HCT116 (cell line): ENCODE measurements at regions of chr6 and their contacts with region 1.

Region 1: GRCh38 chr6:20877008-20877937 is 343.0 kb downstream of the CDKAL1 start:
- DNase-seq: peak; percentile 95
- ATAC-seq: peak; percentile 95
- H3K4me3 ChIP-seq: peak overlapping the region in 1 of 2 experiments; percentile 27; a peak in 2 of 4 replicates
- H3K27ac ChIP-seq: peak overlapping the region; percentile 95
- H3K4me1 ChIP-seq: peaks cover 49 to 66% of the 10 kb centered on the region in 2 experiments
- H3K27me3 ChIP-seq: no peaks in the 10 kb centered on the region
- CTCF ChIP-seq: no peak
- POLR2A ChIP-seq: no peak
- RAD21 ChIP-seq: peak; percentile 59

Region 2: GRCh38 chr6:21003780-21004541 is 126.7 kb after region 1 on chr6:
- CTCF ChIA-PET with region 1: no interaction called
- POLR2A ChIA-PET with region 1: interaction called, 3 read pairs
- RAD21 ChIA-PET with region 1: interaction called, 3 read pairs
- intact Hi-C with region 1: loop called (anchors 5 kb)
- DNase-seq: no peak
- ATAC-seq: peak; percentile 8; the same call in 1 of the 2 replicates
- H3K4me3 ChIP-seq: no peak overlapping the region
- H3K27ac ChIP-seq: peak overlapping the region; percentile 87
- H3K4me1 ChIP-seq: peaks cover 72 to 76% of the 10 kb centered on the region in 2 experiments
- H3K27me3 ChIP-seq: no peaks in the 10 kb centered on the region
- CTCF ChIP-seq: no peak
- POLR2A ChIP-seq: no peak
- RAD21 ChIP-seq: no peak

Region 3: GRCh38 chr6:21305893-21306332 is 428.6 kb after region 1 on chr6:
- CTCF ChIA-PET with region 1: no interaction called
- POLR2A ChIA-PET with region 1: no interaction called
- RAD21 ChIA-PET with region 1: no interaction called
- intact Hi-C with region 1: loop called (anchors 10 kb)
- DNase-seq: no peak
- ATAC-seq: no peak
- H3K4me3 ChIP-seq: no peak overlapping the region
- H3K27ac ChIP-seq: no peak overlapping the region
- H3K4me1 ChIP-seq: no peaks in the 10 kb centered on the region
- H3K27me3 ChIP-seq: no peaks in the 10 kb centered on the region
- CTCF ChIP-seq: peak in 1 of 3 experiments; percentile 13; a peak in 1 of 6 replicates
- POLR2A ChIP-seq: no peak
- RAD21 ChIP-seq: peak; percentile 31; the same call in 1 of the 2 replicates

Region 4: GRCh38 chr6:21935561-21936028 is 1058.3 kb after region 1 on chr6:
- CTCF ChIA-PET with region 1: no interaction called
- POLR2A ChIA-PET with region 1: no interaction called
- RAD21 ChIA-PET with region 1: no interaction called
- intact Hi-C with region 1: loop called (anchors 5 kb)
- DNase-seq: peak; percentile 27
- ATAC-seq: peak; percentile 95
- H3K4me3 ChIP-seq: no peak overlapping the region
- H3K27ac ChIP-seq: no peak overlapping the region
- H3K4me1 ChIP-seq: no peaks in the 10 kb centered on the region
- H3K27me3 ChIP-seq: no peaks in the 10 kb centered on the region
- CTCF ChIP-seq: peak; percentile 43 to 84 (median 78); a peak in 5 of 6 replicates
- POLR2A ChIP-seq: no peak
- RAD21 ChIP-seq: peak; percentile 65